Psoas muscle (tissue), 8 donors: ENCODE measurements at regions of chr16 and their contacts with region 1.

Region 1: GRCh38 chr16:22684574-22685458 is 129.1 kb upstream of the HS3ST2 start:
- DNase-seq: no peak
- ATAC-seq: peak in 1 of 4 donors; percentile 4
- H3K4me3 ChIP-seq: no peak overlapping the region
- H3K27ac ChIP-seq: no peak overlapping the region
- H3K4me1 ChIP-seq: no peaks in the 10 kb centered on the region
- H3K27me3 ChIP-seq: no peaks in the 10 kb centered on the region
- CTCF ChIP-seq: no peak

Region 2: GRCh38 chr16:22813223-22813945 is 128.6 kb after region 1 on chr16:
- intact Hi-C with region 1: loop called in 1 of 2 experiments (anchors 2 kb)
- DNase-seq: peak; percentile 30 to 49
- ATAC-seq: peak; percentile 61 to 78 (median 70)
- H3K4me3 ChIP-seq: peak overlapping the region; percentile 58
- H3K27ac ChIP-seq: no peak overlapping the region
- H3K4me1 ChIP-seq: no peaks in the 10 kb centered on the region
- H3K27me3 ChIP-seq: peaks cover 4 to 45% (median 10%) of the 10 kb centered on the region in 3 donors
- CTCF ChIP-seq: peak; percentile 51

Region 3: DNA sequence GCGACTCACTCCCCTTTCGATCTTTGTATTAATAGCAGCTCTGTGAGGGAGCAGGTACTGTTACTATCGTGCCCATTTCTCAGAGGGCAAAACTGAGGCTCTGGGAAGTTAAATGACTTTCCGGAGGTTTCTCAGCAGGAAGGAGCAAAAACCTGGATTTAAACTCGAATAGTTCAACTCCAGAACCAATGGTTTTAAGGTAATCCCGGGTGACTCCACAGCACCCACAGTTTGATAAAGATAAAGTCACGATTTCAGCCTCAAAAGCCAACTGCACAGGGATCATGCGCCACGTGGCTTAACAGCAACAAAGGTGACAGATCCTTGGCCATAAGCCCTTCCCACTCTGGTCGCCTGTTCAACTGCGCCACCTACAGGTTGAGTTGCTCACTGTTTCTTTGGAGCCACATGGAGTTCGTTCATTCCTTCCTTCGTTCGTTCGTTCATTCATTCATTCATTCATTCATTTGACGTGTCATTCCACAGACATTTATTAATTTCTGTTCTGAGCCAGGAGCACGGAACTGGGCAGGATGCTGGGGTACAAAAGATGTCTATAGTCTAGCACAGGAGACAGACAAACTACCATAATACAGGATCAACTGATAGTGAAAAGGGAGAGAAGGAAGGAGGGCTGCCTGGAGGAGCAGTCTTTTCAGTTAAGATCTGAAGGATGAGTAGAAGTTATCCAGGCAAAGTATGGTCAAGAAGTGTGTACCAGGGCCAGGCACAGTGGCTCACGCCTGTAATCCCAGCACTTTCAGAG is 264.0 kb after region 1 on chr16:
- intact Hi-C with region 1: loop called in 1 of 2 experiments (anchors 2 kb)
- DNase-seq: peak; percentile 51 to 72
- ATAC-seq: peak; percentile 81 to 94 (median 91)
- H3K4me3 ChIP-seq: peak overlapping the region; percentile 8
- H3K27ac ChIP-seq: no peak overlapping the region
- H3K4me1 ChIP-seq: peaks cover 8% of the 10 kb centered on the region
- H3K27me3 ChIP-seq: peaks cover 0 to 9% (median 3%) of the 10 kb centered on the region in 3 donors
- CTCF ChIP-seq: peak; percentile 75